ENCODE measurements at regions of chr11 and their contacts with region 1.

Region 1: DNA sequence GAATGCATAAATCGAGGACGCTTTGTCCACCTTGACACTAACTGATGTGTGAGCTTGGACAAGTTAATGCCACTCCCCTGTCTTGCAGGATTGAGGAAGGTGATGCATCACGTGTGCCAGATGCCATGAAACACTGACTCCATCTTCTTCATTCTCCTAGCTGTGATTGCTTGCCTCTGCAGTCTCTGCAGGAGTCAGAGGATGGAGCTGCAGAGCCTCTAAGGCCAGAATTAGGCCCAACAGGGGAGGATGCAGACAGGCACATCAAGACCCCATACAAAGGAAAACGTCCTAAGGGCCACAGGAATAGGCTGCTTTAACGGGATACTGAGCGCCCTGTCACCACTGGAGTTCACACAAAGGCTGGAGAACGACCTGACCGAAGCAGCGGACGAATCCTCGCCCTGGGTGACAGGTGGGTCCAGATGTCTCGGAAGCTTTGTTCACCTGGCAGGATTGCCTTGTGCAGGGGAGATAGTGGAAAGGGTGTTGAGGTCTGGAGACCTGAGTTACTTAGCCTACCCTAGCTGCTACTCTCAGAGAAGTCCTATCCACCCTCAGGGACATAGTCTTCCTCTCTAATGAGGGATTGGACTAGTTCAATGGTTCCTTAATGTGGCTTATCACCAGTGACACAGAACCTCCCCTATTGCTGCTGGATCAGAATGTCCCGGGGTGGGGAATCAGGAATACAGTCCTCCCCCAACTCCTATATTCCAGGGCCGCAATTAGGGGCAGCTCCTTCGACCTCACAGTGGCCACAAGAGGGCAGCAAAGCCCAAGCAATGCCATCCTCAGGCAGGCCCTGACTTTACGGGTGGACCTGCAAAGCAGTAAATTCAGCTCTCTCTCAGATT is 32.4 kb downstream of the DBX1 start:
- H3K4me3 ChIP-seq: no peak overlapping the region
- H3K27ac ChIP-seq: no peak overlapping the region
- H3K4me1 ChIP-seq: no peaks in the 10 kb centered on the region
- CTCF ChIP-seq: peak; percentile 69

Region 2: DNA sequence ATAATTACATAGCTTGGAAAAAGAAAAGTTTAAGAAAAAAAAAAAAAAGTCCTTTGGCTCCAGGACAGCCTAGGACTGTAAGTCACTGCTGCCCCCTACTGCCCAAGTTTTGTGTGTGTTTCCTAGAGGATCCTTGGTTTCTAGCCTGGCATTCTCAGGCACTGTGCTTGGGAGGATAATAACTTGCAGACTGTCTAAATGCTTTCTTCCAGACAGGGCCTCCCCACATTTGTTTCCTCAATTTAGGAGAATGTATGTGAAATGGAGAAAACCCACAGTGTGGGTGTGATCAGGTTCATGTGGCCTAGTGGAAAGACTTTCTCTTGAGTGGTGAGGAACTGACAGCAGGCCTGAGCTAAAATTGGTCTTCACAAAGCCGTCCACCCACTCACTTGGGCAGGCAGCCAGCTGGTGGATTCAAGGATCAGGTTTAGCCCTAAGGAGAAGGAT is 224.3 kb before region 1 on chr11:
- CTCF ChIA-PET with region 1: interaction called, 22 read pairs
- POLR2A ChIA-PET with region 1: no interaction called
- H3K4me3 ChIP-seq: no peak overlapping the region
- H3K27ac ChIP-seq: no peak overlapping the region
- H3K4me1 ChIP-seq: no peaks in the 10 kb centered on the region
- CTCF ChIP-seq: peak; percentile 56; the same call in 1 of the 2 replicates

Region 3: GRCh38 chr11:19931141-19931770 is 196.6 kb before region 1 on chr11:
- CTCF ChIA-PET with region 1: interaction called, 15 read pairs
- POLR2A ChIA-PET with region 1: no interaction called
- H3K4me3 ChIP-seq: no peak overlapping the region
- H3K27ac ChIP-seq: no peak overlapping the region
- H3K4me1 ChIP-seq: no peaks in the 10 kb centered on the region
- CTCF ChIP-seq: no peak

Region 4: GRCh38 chr11:19951558-19952115 is 176.3 kb before region 1 on chr11:
- CTCF ChIA-PET with region 1: interaction called, 50 read pairs
- POLR2A ChIA-PET with region 1: no interaction called
- H3K4me3 ChIP-seq: no peak overlapping the region
- H3K27ac ChIP-seq: peak overlapping the region; percentile 48
- H3K4me1 ChIP-seq: peaks cover 12% of the 10 kb centered on the region
- CTCF ChIP-seq: no peak

Region 5: GRCh38 chr11:20337526-20338154 is 209.7 kb after region 1 on chr11:
- CTCF ChIA-PET with region 1: interaction called, 34 read pairs
- POLR2A ChIA-PET with region 1: no interaction called
- H3K4me3 ChIP-seq: no peak overlapping the region
- H3K27ac ChIP-seq: no peak overlapping the region
- H3K4me1 ChIP-seq: no peaks in the 10 kb centered on the region
- CTCF ChIP-seq: peak; percentile 44; the same call in 1 of the 2 replicates

Region 6: GRCh38 chr11:20609727-20610707 is 482.1 kb after region 1 on chr11:
- CTCF ChIA-PET with region 1: interaction called, 15 read pairs
- POLR2A ChIA-PET with region 1: no interaction called
- H3K4me3 ChIP-seq: no peak overlapping the region
- H3K27ac ChIP-seq: no peak overlapping the region
- H3K4me1 ChIP-seq: no peaks in the 10 kb centered on the region
- CTCF ChIP-seq: peak; percentile 52

Measured in HEK293 (cell line).